ENCODE measurements at regions of chr11 and their contacts with region 1.

Region 1: GRCh38 chr11:60363542-60364510 is 14.5 kb upstream of the MS4A7 start:
- DNase-seq: peak; percentile 81
- H3K4me3 Mint-ChIP-seq: no peak overlapping the region
- H3K27ac Mint-ChIP-seq: no peak overlapping the region
- H3K4me1 Mint-ChIP-seq: peaks cover 4% of the 10 kb centered on the region
- H3K27me3 Mint-ChIP-seq: peaks cover 27% of the 10 kb centered on the region

Region 2: DNA sequence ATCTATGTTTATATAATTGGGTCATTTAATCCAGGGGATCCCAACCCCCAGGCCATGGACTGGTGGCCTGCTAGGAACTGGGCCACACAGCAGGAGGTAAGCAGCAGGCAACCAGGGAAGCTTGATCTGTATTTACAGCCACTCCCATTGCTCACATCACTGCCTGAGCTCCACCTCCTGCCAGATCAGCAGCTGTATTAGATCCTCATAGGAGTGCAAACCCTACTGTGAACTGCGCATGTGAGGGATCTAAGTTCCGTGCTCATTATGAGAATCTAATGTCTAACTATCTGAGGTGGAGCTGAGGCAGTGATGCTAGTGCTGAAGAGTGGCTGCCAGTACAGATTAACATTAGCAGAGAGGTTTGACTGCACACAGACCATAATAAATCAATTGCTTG is 242.6 kb before region 1 on chr11:
- CTCF ChIA-PET with region 1: no interaction called
- intact Hi-C with region 1: no loop called
- DNase-seq: no peak
- H3K4me3 Mint-ChIP-seq: no peak overlapping the region
- H3K27ac Mint-ChIP-seq: no peak overlapping the region
- H3K4me1 Mint-ChIP-seq: no peaks in the 10 kb centered on the region
- H3K27me3 Mint-ChIP-seq: peaks cover 9% of the 10 kb centered on the region

Region 3: GRCh38 chr11:60184824-60185511 is 178.9 kb before region 1 on chr11:
- CTCF ChIA-PET with region 1: no interaction called
- intact Hi-C with region 1: no loop called
- DNase-seq: no peak
- H3K4me3 Mint-ChIP-seq: no peak overlapping the region
- H3K27ac Mint-ChIP-seq: no peak overlapping the region
- H3K4me1 Mint-ChIP-seq: no peaks in the 10 kb centered on the region
- H3K27me3 Mint-ChIP-seq: peaks cover 21% of the 10 kb centered on the region

Region 4: DNA sequence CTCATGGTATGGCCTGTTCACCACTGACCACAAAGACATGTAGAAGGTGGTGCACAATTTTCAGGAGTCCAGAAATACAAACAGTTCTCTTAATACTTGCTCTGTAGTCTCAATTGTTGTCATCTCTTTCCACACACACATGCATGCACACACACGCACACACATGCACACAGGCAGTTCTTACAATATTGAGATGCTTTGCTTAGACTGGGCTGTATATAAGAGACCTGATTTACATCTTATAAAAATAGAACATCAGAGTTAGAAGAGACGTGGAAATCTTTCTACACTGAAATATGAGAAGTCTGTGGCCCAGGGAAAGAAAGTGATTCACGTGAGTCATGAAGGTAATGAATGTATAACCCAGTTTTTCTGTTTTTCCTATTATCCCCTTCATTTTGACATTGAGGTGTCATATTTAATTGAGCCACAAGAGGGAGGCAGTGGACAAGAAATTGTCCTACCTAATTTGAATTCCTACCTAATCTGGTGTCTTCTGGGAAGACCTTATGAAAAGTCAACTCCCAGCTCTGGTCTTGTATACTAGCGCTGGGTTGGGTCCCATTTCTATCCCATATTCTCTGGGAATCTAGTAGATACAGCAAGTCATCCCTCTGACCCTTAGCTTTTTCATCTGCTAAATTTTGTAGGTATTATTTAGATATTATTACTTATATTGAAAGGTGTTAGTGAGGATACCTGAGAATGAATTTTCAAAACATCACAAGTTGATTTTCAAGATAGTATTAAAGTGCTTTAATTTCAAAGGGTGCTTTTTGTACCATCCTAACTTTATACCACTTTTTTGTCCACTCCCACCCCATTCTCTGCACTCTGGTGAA is 98.2 kb before region 1 on chr11:
- CTCF ChIA-PET with region 1: interaction called, 5 read pairs
- intact Hi-C with region 1: loop called (anchors 5 kb)
- DNase-seq: peak; percentile 27
- H3K4me3 Mint-ChIP-seq: no peak overlapping the region
- H3K27ac Mint-ChIP-seq: no peak overlapping the region
- H3K4me1 Mint-ChIP-seq: no peaks in the 10 kb centered on the region
- H3K27me3 Mint-ChIP-seq: peaks cover 8% of the 10 kb centered on the region

Region 5: GRCh38 chr11:60310407-60311279 is 53.2 kb before region 1 on chr11:
- CTCF ChIA-PET with region 1: no interaction called
- intact Hi-C with region 1: loop called (anchors 1 kb)
- DNase-seq: no peak
- H3K4me3 Mint-ChIP-seq: no peak overlapping the region
- H3K27ac Mint-ChIP-seq: no peak overlapping the region
- H3K4me1 Mint-ChIP-seq: peaks cover 4% of the 10 kb centered on the region
- H3K27me3 Mint-ChIP-seq: peaks cover 9% of the 10 kb centered on the region

Region 6: DNA sequence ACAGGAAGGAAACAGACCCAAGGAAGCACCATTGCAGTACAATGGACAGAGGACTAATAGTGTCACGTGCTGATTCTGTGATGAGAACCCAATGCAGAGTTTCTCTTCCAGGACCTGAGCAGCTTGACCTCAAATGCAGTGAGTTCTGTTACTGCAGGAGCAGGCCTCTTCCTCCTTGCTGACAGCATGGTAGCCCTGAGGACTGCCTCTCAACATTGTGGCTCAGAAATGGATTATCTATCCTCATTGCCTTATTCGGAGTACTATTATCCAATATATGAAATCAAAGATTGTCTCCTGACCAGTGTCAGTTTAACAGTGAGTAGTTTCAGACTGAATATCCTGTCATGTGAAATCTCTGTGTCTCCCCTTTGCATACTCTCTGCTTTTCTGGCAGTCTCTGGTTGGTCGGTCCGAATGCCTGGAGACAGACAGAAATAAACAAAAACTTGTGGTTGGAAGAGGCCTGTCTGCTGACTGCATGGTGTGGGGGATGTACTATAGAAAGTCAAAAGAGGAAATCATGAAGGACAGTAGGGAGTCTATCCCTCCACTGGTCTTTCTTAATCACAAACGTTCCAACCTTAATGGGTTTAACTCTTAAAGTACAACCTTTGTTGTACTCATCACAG is 25.6 kb after region 1 on chr11:
- CTCF ChIA-PET with region 1: no interaction called
- intact Hi-C with region 1: no loop called
- DNase-seq: no peak
- H3K4me3 Mint-ChIP-seq: no peak overlapping the region
- H3K27ac Mint-ChIP-seq: no peak overlapping the region
- H3K4me1 Mint-ChIP-seq: no peaks in the 10 kb centered on the region
- H3K27me3 Mint-ChIP-seq: peaks cover 10% of the 10 kb centered on the region

Region 7: GRCh38 chr11:60447846-60448245 is 84.0 kb after region 1 on chr11:
- CTCF ChIA-PET with region 1: no interaction called
- intact Hi-C with region 1: loop called (anchors 1 kb)
- DNase-seq: no peak
- H3K4me3 Mint-ChIP-seq: no peak overlapping the region
- H3K27ac Mint-ChIP-seq: no peak overlapping the region
- H3K4me1 Mint-ChIP-seq: peaks cover 14% of the 10 kb centered on the region
- H3K27me3 Mint-ChIP-seq: no peaks in the 10 kb centered on the region

Region 8: GRCh38 chr11:60485986-60486385 is 122.2 kb after region 1 on chr11:
- CTCF ChIA-PET with region 1: interaction called, 13 read pairs
- intact Hi-C with region 1: loop called (anchors 1 kb)
- DNase-seq: peak; percentile 38
- H3K4me3 Mint-ChIP-seq: no peak overlapping the region
- H3K27ac Mint-ChIP-seq: no peak overlapping the region
- H3K4me1 Mint-ChIP-seq: peaks cover 4% of the 10 kb centered on the region
- H3K27me3 Mint-ChIP-seq: no peaks in the 10 kb centered on the region

Region 9: DNA sequence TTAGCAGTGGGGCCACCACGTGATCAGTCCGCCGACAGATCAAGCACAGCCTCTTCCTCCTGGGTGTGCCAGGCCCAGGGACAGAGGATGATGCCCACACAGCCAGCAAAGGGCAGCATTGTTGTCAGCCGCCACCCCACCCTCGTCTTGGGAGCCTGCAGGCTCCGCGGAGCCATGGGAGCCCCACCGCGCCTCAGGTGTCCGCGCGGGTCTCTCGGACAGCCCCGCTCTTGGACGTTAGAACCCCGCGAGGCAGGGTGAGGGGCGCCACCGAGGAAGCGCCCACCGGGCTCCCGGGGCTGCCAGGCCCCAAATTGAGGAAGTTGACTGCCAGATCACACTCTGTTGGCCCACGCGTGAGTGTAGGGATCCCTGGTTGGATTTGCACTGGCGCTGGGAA is 251.7 kb after region 1 on chr11:
- CTCF ChIA-PET with region 1: interaction called, 49 read pairs
- intact Hi-C with region 1: loop called (anchors 1 kb)
- DNase-seq: no peak
- H3K4me3 Mint-ChIP-seq: no peak overlapping the region
- H3K27ac Mint-ChIP-seq: no peak overlapping the region
- H3K4me1 Mint-ChIP-seq: no peaks in the 10 kb centered on the region
- H3K27me3 Mint-ChIP-seq: peaks cover 18% of the 10 kb centered on the region

Region 10: GRCh38 chr11:60625262-60625661 is 261.4 kb after region 1 on chr11:
- CTCF ChIA-PET with region 1: interaction called, 49 read pairs
- intact Hi-C with region 1: no loop called
- DNase-seq: peak; percentile 17
- H3K4me3 Mint-ChIP-seq: no peak overlapping the region
- H3K27ac Mint-ChIP-seq: no peak overlapping the region
- H3K4me1 Mint-ChIP-seq: no peaks in the 10 kb centered on the region
- H3K27me3 Mint-ChIP-seq: peaks cover 4% of the 10 kb centered on the region